ENCODE measurements at regions of chr17 and their contacts with region 1.

Region 1: GRCh38 chr17:7004398-7005253 is 7.8 kb upstream of the RNASEK start:
- DNase-seq: no peak
- H3K4me3 ChIP-seq: no peak overlapping the region
- CTCF ChIP-seq: peak in 1 of 3 donors; percentile 53
- POLR2A ChIP-seq: no peak

Region 2: GRCh38 chr17:6660805-6661463 is 343.7 kb before region 1 on chr17:
- intact Hi-C with region 1: loop called (anchors 5 kb)
- DNase-seq: peak in 1 of 2 donors; percentile 73
- H3K4me3 ChIP-seq: no peak overlapping the region
- CTCF ChIP-seq: no peak
- POLR2A ChIP-seq: no peak

Region 3: DNA sequence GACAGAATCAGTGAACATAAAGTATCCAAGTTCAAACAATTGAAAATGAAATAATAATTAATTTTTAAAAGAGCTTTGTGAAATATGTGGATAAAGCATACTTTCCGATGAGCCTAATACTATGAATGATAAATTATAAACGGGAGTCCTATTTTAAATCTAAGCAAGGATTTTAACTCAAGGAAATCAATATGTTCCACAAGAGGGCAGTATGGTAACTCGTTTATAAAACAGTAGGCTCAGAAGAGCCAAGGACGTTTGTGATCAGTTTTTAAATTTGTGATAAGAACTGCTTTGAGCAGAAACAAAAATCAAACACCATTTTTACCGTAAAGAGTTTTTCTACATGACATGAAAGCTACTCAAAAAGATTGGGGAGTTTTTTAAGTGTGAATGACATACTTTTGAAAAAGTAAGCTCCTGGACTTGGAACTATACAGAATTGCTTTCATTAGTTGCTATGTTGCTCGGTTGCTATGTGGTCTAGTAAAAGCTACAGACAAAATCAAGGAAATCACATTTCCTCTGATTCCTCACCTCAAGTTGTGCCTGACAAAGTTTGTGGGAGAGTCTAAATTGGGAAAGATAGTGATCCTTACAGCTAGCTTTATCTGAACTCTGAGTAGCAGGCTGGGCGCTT is 161.3 kb before region 1 on chr17:
- intact Hi-C with region 1: loop called (anchors 5 kb)
- DNase-seq: no peak
- H3K4me3 ChIP-seq: no peak overlapping the region
- CTCF ChIP-seq: no peak
- POLR2A ChIP-seq: no peak

Region 4: GRCh38 chr17:6913608-6914443 is 90.8 kb before region 1 on chr17:
- intact Hi-C with region 1: loop called (anchors 2 kb)
- DNase-seq: peak; percentile 74 to 94
- H3K4me3 ChIP-seq: no peak overlapping the region
- CTCF ChIP-seq: no peak
- POLR2A ChIP-seq: no peak